ENCODE measurements at regions of chr14 and their contacts with region 1.

Region 1: GRCh38 chr14:75906676-75907280 is 75.0 kb downstream of the TGFB3 start:
- DNase-seq: no peak
- H3K4me3 ChIP-seq: no peak overlapping the region
- CTCF ChIP-seq: peak; percentile 68

Region 2: GRCh38 chr14:75794615-75795038 is 112.2 kb before region 1 on chr14:
- CTCF ChIA-PET with region 1: interaction called, 24 read pairs
- POLR2A ChIA-PET with region 1: no interaction called
- DNase-seq: peak; percentile 21
- H3K4me3 ChIP-seq: no peak overlapping the region
- CTCF ChIP-seq: peak; percentile 50

Region 3: DNA sequence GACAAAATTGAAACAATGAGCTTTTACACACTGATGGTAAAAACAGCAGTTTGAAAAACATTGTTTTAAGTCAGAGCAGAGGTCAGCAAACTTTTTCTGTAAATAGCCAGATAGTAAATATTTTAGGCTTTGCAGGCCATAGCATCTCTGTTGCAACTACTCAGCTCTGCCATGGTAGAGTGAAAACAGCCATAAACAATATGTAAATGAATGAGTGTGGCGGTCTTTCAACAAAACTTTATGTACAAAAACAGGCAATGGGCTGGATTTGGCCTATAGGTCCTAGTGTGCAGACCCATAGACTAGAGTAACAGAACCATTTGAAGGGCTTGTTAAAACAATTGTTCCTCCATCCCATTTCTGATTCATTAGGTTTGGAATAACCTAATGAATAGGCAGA is 39.8 kb before region 1 on chr14:
- CTCF ChIA-PET with region 1: interaction called, 20 read pairs
- POLR2A ChIA-PET with region 1: no interaction called
- DNase-seq: no peak
- H3K4me3 ChIP-seq: no peak overlapping the region
- CTCF ChIP-seq: no peak

Region 4: DNA sequence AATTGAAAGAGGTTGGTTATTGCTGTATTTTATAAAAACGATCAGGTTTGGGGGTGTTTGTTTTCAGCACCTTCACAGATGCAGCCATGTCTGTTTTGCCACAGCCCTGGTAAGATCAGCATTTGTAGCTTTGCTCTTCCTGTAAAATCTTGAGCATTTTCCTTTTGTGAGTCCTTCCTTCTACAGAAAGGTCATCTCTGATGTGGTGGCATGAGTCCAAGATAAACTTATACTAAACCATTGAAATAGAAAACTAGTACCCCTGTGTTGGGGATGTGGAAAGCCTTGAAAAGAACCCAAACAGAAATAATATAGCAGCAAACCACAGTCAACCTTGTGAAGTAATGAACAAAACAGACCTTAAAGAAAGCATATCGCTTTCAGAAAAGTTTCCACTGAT is 10.4 kb before region 1 on chr14:
- CTCF ChIA-PET with region 1: interaction called, 163 read pairs
- POLR2A ChIA-PET with region 1: no interaction called
- DNase-seq: no peak
- H3K4me3 ChIP-seq: no peak overlapping the region
- CTCF ChIP-seq: no peak

Region 5: GRCh38 chr14:75934998-75935628 is 28.3 kb after region 1 on chr14:
- CTCF ChIA-PET with region 1: interaction called, 45 read pairs
- POLR2A ChIA-PET with region 1: no interaction called
- DNase-seq: no peak
- H3K4me3 ChIP-seq: no peak overlapping the region
- CTCF ChIP-seq: no peak

Region 6: GRCh38 chr14:75968456-75968855 is 61.7 kb after region 1 on chr14:
- CTCF ChIA-PET with region 1: interaction called, 12 read pairs
- POLR2A ChIA-PET with region 1: no interaction called
- DNase-seq: no peak
- H3K4me3 ChIP-seq: no peak overlapping the region
- CTCF ChIP-seq: no peak

Region 7: DNA sequence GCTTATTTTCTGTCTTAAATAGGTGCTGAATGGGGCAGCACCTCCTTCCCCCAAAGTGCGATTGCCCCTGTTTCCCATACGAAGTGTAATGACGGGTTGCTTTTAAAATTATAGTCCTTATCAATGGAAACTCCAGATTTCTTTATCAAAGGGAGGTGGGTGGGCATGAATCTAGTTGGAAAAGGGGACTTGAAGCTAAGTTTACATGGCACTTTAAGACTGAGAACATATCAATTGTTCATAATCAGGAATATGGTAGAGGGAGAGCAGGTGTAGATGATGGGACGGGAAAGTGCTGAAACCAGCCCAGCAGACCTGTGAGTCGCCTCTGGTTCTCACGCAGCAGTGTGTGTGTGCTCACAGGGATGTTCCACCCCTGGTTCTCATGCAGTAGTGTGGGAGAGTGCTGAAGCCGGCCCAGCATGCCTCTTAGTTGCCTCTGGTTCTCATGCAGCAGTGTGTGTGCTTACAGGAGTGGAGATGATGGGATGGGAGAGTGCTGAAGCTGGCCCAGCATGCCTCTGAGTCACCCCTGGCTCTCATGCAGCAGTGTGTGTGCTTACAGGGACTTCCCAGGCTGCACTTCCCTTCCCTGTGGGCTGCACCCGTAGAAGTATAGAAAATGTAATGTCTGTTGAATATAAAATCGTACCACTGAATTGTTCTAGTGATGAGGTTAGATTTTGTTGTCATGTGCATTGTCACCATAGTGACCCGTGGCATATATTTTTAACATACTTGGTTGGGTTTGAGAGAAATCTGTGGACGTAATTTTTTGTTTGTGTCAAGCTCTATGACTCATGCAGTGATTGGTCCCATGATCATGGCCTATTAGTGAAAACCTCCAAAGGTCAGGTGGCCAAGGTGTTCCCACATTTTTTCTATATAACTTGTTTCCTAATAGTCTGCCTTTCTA is 296.6 kb after region 1 on chr14:
- CTCF ChIA-PET with region 1: no interaction called
- POLR2A ChIA-PET with region 1: no interaction called
- DNase-seq: peak; percentile 83
- H3K4me3 ChIP-seq: no peak overlapping the region
- CTCF ChIP-seq: no peak

Measured in AG04449 (cell line).